Common myeloid progenitor, CD34-positive (primary cell): ENCODE measurements at regions of chr10 and their contacts with region 1.

Region 1: DNA sequence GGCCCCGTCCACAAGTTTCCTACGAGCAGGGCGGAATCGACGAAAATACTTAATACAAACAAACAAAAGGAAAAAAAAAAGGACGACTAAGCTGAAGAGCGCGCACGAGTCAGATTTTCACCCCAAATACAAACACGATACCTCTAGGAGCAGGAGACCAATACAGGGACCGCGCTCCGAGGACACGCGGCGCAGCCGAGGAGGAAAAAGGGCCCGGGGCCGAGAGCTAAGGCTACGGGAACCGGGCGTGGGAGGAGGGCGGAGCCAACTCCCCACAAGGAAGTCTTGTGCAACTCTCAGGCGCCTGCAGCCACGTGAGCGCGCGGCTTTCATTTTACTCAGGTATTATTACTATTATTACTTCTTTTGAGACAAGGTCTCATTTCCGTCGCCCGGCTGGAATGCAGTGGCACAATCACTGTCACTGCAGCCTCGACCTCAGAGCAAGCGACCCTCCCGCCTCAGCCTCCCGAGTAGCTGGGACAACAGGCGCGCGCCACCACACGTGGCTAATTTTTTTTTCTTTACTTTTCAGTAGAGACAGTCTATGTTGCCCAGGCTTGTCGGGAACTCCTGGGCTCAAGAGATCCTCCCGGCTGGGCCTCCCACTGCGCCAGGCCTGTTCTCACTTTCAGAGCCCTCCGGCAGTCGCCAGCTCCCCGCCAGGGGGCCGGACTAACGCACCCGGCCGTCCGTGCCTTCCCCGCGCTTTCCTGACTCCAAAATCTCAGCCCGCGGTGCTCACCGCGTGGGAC is 1.2 kb downstream of the HNRNPF start:
- DNase-seq: peak; percentile 89 to 94 (median 93)
- H3K4me3 ChIP-seq: peak overlapping the region; percentile 76 to 92 (median 84)
- H3K27ac ChIP-seq: peak overlapping the region; percentile 98 to 99
- H3K4me1 ChIP-seq: peaks cover 7 to 60% (median 45%) of the 10 kb centered on the region in 4 experiments
- H3K27me3 ChIP-seq: no peaks in the 10 kb centered on the region

Region 2: DNA sequence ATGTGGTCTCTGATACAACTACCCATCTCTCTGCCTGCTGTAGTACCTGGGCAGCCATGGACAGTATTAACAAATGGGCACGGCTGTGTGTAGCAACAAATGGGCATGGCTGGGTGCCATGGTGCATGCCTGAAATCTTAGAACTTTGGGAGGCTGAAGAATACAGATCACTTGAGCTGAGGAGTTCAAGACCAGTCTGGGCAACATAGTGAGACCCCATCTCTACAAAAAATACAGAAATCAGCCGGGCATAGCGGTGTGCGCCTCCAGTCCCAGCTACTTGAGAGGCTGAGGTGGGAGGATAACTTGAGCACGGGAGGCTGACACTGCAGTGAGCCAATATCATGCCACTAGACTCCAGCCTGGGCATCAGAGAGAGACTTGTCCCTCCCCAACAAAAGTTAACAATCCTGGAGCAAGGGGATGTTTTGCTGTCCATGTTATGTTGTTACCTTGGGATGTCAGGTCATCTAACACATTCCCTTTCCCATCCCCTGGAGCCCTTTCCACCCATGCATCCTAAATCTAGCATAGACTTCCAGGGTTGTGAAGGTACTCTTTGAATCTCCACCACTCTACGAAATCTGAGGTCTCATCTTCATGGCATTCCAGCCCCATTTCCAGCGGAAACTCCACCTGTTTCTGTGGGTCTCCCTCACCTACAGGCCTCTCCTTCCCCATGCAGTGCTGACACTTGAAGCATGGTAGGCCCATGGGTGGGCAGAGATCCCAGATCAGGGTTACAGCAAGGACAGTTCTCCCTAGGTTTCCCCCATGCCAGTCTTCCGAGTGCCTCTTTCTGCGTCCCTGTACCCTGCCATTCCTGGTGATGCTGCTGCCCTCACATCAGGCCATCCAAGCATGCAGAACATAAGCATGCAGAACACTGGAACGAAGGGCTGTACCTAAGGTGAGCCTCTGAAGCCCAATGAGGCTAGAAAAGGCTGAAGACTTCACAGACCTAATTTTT is 23.2 kb before region 1 on chr10:
- CTCF ChIA-PET with region 1: no interaction called
- POLR2A ChIA-PET with region 1: no interaction called
- DNase-seq: no peak
- H3K4me3 ChIP-seq: no peak overlapping the region
- H3K27ac ChIP-seq: no peak overlapping the region
- H3K4me1 ChIP-seq: no peaks in the 10 kb centered on the region
- H3K27me3 ChIP-seq: no peaks in the 10 kb centered on the region

Region 3: GRCh38 chr10:43420369-43421200 is 12.8 kb after region 1 on chr10:
- CTCF ChIA-PET with region 1: interaction called, 10 read pairs
- POLR2A ChIA-PET with region 1: interaction called, 32 read pairs
- DNase-seq: peak; percentile 92 to 96 (median 96)
- H3K4me3 ChIP-seq: peak overlapping the region; percentile 9 to 74 (median 61)
- H3K27ac ChIP-seq: peak overlapping the region; percentile 78 to 89
- H3K4me1 ChIP-seq: peaks cover 3 to 47% (median 35%) of the 10 kb centered on the region in 4 experiments
- H3K27me3 ChIP-seq: no peaks in the 10 kb centered on the region

Region 4: DNA sequence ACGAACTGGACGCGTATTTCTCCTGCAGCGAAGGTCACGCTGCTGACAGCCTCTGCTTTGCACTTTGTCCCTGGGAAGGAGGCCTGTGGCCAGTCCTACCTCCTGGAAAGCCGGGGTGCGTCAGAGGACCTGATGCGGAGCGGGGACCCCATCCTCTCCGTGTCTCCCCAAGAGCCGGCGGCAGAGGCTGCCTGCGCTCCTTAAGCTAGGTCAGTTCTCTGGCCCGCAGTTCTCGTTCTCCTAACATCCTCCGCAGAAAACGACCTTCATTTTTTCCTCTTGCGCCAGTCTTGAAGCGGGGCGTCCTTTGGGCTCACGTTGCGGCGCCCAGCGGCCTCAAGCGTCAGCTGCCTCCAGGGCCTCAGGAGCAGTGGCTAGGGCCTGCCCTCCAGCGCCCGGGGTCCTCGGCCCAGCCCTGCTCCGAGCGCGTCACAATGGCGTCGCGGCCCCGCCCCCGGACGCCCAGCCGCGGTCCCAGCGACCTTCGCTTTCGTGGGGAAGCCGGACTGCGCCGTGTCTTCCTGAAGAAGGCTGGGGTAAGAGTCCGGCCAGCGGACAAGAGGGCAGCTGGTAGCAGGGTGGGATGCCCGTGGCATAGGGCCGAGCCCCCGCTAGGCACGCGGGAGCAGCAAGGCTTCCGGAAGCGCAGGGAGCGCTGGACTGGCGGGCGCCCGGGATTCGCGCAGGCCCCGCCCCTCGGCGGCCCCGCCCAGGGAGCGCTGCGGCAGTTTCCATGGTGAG is 28.8 kb after region 1 on chr10 and contains the start of gene ZNF487:
- CTCF ChIA-PET with region 1: interaction called, 10 read pairs
- POLR2A ChIA-PET with region 1: interaction called, 5 read pairs
- DNase-seq: peak; percentile 92 to 96 (median 94)
- H3K4me3 ChIP-seq: peak within 1 kb of the TSS; percentile 56 to 93 (median 88)
- H3K27ac ChIP-seq: peak within 1 kb of the TSS; percentile 94 to 97
- H3K4me1 ChIP-seq: peaks cover 1 to 10% (median 4%) of the 10 kb centered on the region in 4 experiments
- H3K27me3 ChIP-seq: no peaks in the 10 kb centered on the region

Region 5: GRCh38 chr10:43765516-43765915 is 357.8 kb after region 1 on chr10:
- CTCF ChIA-PET with region 1: no interaction called
- POLR2A ChIA-PET with region 1: no interaction called
- DNase-seq: no peak
- H3K4me3 ChIP-seq: no peak overlapping the region
- H3K27ac ChIP-seq: no peak overlapping the region
- H3K4me1 ChIP-seq: no peaks in the 10 kb centered on the region
- H3K27me3 ChIP-seq: peaks cover 0 to 2% (median 0%) of the 10 kb centered on the region in 5 experiments